ENCODE measurements at regions of chr14 and their contacts with region 1.

Region 1: GRCh38 chr14:32244404-32244803 is 41.3 kb upstream of the RNU6-8 start:
- DNase-seq: no peak
- ATAC-seq: no peak
- H3K4me3 ChIP-seq: no peak overlapping the region
- H3K27ac ChIP-seq: no peak overlapping the region
- H3K4me1 ChIP-seq: no peaks in the 10 kb centered on the region
- H3K27me3 ChIP-seq: no peaks in the 10 kb centered on the region
- CTCF ChIP-seq: no peak

Region 2: DNA sequence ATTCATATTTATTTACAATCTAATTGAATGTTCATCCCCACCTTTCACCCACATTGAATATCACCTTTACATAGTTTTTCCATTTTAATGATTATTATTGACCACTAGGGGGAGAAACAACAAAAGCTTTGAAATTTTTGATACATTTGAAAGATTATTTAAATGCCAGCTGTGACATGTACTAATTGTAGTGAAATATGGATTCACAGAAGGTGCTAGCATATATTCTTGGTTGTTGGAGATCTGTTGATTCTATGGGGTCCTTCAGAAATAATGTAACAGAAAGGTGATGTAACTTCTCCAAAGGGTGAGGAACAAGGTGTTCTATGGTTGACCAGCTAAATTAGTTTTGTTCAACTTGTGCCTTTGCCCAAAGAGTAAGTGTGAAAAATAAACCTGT is 734.2 kb before region 1 on chr14:
- intact Hi-C with region 1: loop called in 1 of 3 experiments (anchors 10 kb)
- DNase-seq: no peak
- ATAC-seq: peak in 2 of 4 donors; percentile 30 to 48
- H3K4me3 ChIP-seq: no peak overlapping the region
- H3K27ac ChIP-seq: no peak overlapping the region
- H3K4me1 ChIP-seq: no peaks in the 10 kb centered on the region
- H3K27me3 ChIP-seq: no peaks in the 10 kb centered on the region
- CTCF ChIP-seq: peak; percentile 27 to 64 (median 50)

Region 3: DNA sequence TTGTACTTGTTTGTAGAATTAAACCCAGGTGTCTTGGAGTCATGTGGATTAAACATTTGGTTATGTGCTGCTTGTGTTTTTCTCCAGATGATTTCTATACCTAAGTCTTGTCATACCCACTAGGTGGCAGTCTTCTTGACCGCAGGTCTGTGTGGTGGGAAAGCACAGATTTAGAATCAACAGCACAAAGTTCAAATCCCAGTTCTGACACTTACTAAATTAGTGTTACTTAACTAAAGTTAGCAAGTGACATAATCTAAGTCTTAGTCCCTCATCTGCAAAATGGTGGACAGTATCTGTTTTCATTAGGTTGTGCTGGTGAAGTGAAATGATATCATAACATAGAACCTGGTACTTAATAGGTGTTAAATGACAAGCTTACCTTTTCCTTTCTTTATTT is 318.3 kb before region 1 on chr14:
- intact Hi-C with region 1: loop called in 1 of 3 experiments (anchors 10 kb)
- DNase-seq: no peak
- ATAC-seq: peak; percentile 50 to 74 (median 64)
- H3K4me3 ChIP-seq: no peak overlapping the region
- H3K27ac ChIP-seq: no peak overlapping the region
- H3K4me1 ChIP-seq: no peaks in the 10 kb centered on the region
- H3K27me3 ChIP-seq: no peaks in the 10 kb centered on the region
- CTCF ChIP-seq: peak; percentile 20 to 42 (median 32)

Region 4: GRCh38 chr14:32064931-32065330 is 179.5 kb before region 1 on chr14:
- intact Hi-C with region 1: loop called in 1 of 3 experiments (anchors 10 kb)
- DNase-seq: no peak
- ATAC-seq: no peak
- H3K4me3 ChIP-seq: no peak overlapping the region
- H3K27ac ChIP-seq: no peak overlapping the region
- H3K4me1 ChIP-seq: no peaks in the 10 kb centered on the region
- H3K27me3 ChIP-seq: no peaks in the 10 kb centered on the region
- CTCF ChIP-seq: no peak

Region 5: DNA sequence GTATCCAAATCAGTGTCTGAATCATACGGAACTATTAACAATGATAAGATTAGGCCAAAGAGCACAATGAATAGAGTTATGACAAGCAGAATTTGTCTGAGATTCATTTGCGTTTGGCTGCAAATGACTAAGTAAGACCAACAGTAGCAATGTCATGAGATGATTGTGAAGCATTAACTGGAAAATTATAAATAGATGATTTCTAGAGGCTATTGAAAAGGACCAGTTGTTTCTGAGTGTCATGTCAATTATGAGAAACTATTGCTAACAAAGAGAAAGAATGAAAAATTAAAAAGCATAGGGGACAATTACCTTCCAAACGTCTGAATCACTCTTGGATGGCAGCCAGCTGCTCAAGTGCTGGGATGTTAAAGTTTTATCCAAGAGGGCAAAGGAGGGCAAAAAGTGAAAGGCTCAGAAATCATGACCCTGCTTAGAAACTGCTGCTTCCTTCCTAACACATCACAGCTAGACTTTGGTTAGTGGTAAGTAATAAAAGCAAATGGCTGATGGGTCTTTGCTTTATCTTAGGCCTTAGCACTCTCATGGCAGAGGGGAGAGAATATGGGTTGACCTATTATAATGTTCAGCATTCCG is 173.7 kb after region 1 on chr14:
- intact Hi-C with region 1: no loop called
- DNase-seq: peak in 4 of 6 donors; percentile 13 to 54 (median 22)
- ATAC-seq: peak in 3 of 4 donors; percentile 9 to 33 (median 25)
- H3K4me3 ChIP-seq: no peak overlapping the region
- H3K27ac ChIP-seq: no peak overlapping the region
- H3K4me1 ChIP-seq: no peaks in the 10 kb centered on the region
- H3K27me3 ChIP-seq: no peaks in the 10 kb centered on the region
- CTCF ChIP-seq: no peak